PC-9 (cell line): ENCODE measurements at regions of chr4 and their contacts with region 1.

Region 1: DNA sequence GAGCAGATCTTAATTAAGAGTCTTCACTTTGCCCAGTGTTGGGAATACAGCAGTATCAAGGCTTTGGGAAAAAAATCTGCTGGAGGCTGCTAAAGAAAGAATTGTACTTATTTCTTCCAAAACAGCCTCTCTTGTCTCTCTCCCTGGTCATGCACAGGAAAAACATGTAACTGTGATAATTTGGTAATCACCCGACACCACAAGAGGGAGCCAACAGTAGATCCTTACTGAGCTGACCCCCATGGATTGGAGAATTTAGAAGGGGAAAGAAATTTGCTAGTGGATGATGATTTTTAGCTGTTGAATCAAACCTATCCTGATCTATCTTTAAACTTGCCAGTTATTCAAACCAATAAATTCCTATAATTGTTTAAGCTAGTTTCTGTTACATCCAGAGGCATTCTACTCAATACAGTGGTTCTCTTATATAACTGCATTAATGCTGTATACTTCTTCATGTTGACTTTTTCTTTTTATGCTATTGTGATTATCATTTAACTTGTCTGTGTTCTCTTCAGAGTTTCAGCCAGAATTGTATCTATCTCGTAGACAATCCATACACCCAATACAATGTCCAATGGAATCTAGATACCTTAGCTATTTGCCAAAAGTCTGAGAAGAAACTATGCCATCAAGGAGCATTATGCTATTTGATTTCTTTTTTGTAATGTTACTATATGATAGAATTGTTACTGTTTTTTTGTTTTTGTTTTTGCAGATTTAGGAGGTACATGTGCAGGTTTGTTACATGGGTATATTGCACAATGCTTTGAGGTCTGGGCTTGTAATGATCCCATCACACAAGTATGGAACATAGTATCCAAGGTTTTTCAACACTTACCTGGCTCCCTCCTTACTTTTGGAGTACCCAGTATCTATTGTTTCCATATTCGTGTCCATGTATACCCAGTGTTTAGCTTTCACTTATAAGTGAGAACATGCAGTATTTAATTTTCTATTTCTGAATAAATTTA is 31.3 kb upstream of the ARHGEF38 start:
- DNase-seq: peak in 1 of 2 experiments; percentile 8
- H3K4me3 ChIP-seq: no peak overlapping the region
- H3K27ac ChIP-seq: no peak overlapping the region
- H3K4me1 ChIP-seq: no peaks in the 10 kb centered on the region
- H3K27me3 ChIP-seq: no peaks in the 10 kb centered on the region
- CTCF ChIP-seq: peak; percentile 72

Region 2: DNA sequence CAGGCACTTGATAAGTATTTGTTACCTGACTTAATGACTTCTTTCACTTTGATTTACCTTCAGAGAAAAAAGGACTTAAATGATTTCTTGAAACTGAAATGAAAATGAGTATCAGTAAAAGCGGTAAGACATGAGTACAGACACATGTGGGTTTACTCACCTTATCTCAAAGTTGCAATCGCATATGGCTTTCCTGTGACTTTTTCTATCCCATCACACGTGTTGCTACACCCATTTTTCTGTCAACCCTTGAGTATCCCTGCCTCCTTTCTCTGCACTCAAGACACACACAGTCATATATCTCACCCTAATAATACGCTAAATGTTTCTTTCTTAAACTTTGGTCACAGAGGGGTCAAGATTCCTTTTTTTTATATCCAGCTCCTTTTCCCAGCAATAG is 20.3 kb after region 1 on chr4:
- CTCF ChIA-PET with region 1: no interaction called
- POLR2A ChIA-PET with region 1: no interaction called
- intact Hi-C with region 1: no loop called
- DNase-seq: no peak
- H3K4me3 ChIP-seq: no peak overlapping the region
- H3K27ac ChIP-seq: no peak overlapping the region
- H3K4me1 ChIP-seq: no peaks in the 10 kb centered on the region
- H3K27me3 ChIP-seq: no peaks in the 10 kb centered on the region
- CTCF ChIP-seq: no peak

Region 3: GRCh38 chr4:105666693-105667092 is 145.6 kb after region 1 on chr4:
- CTCF ChIA-PET with region 1: interaction called, 11 read pairs
- POLR2A ChIA-PET with region 1: no interaction called
- intact Hi-C with region 1: loop called (anchors 2 kb)
- DNase-seq: peak in 1 of 2 experiments; percentile 37
- H3K4me3 ChIP-seq: no peak overlapping the region
- H3K27ac ChIP-seq: no peak overlapping the region
- H3K4me1 ChIP-seq: no peaks in the 10 kb centered on the region
- H3K27me3 ChIP-seq: no peaks in the 10 kb centered on the region
- CTCF ChIP-seq: peak; percentile 62

Region 4: GRCh38 chr4:105715692-105716278 is 194.7 kb after region 1 on chr4:
- CTCF ChIA-PET with region 1: interaction called, 4 read pairs
- POLR2A ChIA-PET with region 1: interaction called, 3 read pairs
- intact Hi-C with region 1: loop called (anchors 2 kb)
- DNase-seq: peak in 1 of 2 experiments; percentile 38
- H3K4me3 ChIP-seq: no peak overlapping the region
- H3K27ac ChIP-seq: no peak overlapping the region
- H3K4me1 ChIP-seq: no peaks in the 10 kb centered on the region
- H3K27me3 ChIP-seq: no peaks in the 10 kb centered on the region
- CTCF ChIP-seq: peak; percentile 63